ENCODE measurements at regions of chr4 and their contacts with region 1.

Region 1: GRCh38 chr4:173505924-173506518 is 24.0 kb downstream of the HAND2 start:
- DNase-seq: peak; percentile 45
- ATAC-seq: peak; percentile 96
- H3K4me3 ChIP-seq: no peak overlapping the region
- H3K27ac ChIP-seq: no peak overlapping the region
- H3K4me1 ChIP-seq: no peaks in the 10 kb centered on the region
- H3K27me3 ChIP-seq: peaks cover 82% of the 10 kb centered on the region
- CTCF ChIP-seq: peak; percentile 79
- POLR2A ChIP-seq: no peak
- RAD21 ChIP-seq: peak; percentile 85

Region 2: DNA sequence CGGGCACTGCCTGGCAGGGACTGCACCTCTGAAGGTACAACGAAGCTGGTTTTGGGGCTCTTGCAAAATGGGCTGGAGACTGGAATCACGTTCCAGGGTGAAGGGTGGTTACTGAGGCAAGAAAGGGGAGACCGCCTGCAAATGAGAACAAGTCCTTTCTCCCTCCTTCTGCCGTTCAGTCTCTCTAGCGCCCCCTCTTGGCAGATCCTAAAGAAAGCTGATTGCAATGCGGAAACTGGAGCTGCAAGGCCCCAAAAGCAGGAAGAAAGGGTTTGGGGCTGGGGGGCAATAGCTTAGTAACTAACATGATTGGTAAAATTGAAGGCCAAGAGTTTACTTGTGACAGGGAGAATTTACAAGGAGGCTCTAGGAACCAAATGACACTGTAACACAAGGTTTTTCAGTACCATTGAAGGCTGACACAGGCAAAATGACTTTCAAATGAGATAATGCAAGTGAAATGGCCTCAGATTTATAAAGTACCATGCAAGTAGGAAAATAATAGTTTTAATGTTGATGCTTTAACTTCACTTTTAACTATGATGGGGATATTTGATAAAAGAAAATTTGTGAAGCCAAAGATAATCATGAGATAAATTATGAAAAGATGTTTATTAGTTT is 246.7 kb after region 1 on chr4:
- CTCF ChIA-PET with region 1: no interaction called
- POLR2A ChIA-PET with region 1: no interaction called
- dilution Hi-C with region 1: no loop called
- in situ Hi-C with region 1: no loop called
- intact Hi-C with region 1: loop called (anchors 1 kb)
- DNase-seq: peak; percentile 4
- ATAC-seq: no peak
- H3K4me3 ChIP-seq: no peak overlapping the region
- H3K27ac ChIP-seq: no peak overlapping the region
- H3K4me1 ChIP-seq: no peaks in the 10 kb centered on the region
- H3K27me3 ChIP-seq: no peaks in the 10 kb centered on the region
- CTCF ChIP-seq: 0 out of 2 replicates have a peak, but pooled peaks have one; percentile 18
- POLR2A ChIP-seq: no peak
- RAD21 ChIP-seq: no peak

Region 3: DNA sequence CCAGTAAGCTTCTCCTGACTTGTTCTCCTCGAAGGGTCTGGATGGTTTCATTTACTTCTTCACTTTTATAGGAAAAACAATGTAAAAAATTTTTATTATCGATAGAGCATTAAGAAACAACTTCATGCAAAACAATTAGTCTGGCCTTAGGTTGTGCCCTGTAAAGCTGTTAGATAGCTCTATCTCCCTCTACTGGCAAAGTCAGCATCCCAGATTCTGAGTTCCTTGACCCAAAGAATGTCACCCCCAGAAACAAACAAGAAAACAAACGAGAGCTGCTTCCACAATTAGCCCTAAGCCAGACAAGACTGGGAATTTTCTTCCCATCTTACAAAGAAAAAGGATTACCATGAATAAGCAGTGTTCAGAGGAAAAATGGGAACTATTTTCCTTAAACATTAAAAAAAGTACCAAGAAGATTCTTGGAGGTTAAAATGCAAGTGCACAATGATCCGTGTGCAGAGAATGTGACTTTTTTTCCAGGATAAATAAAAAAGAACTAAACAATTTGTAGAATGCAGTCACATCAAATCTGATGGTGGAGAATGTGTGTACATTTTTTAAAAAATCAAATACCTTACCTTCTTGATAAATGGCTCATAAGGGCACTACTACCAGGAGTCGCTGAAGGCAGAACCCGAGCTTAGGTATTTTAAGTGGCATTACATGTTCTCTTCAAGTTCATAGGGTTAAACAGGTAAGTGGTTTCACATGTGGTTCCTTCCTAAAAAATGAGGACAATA is 484.3 kb after region 1 on chr4:
- CTCF ChIA-PET with region 1: interaction called, 5 read pairs
- POLR2A ChIA-PET with region 1: no interaction called
- dilution Hi-C with region 1: no loop called
- in situ Hi-C with region 1: loop called (anchors 10 kb)
- intact Hi-C with region 1: loop called (anchors 1 kb)
- DNase-seq: peak; percentile 46
- ATAC-seq: peak; percentile 83
- H3K4me3 ChIP-seq: no peak overlapping the region
- H3K27ac ChIP-seq: no peak overlapping the region
- H3K4me1 ChIP-seq: no peaks in the 10 kb centered on the region
- H3K27me3 ChIP-seq: peaks cover 2% of the 10 kb centered on the region
- CTCF ChIP-seq: peak; percentile 56
- POLR2A ChIP-seq: no peak
- RAD21 ChIP-seq: peak; percentile 69

Region 4: DNA sequence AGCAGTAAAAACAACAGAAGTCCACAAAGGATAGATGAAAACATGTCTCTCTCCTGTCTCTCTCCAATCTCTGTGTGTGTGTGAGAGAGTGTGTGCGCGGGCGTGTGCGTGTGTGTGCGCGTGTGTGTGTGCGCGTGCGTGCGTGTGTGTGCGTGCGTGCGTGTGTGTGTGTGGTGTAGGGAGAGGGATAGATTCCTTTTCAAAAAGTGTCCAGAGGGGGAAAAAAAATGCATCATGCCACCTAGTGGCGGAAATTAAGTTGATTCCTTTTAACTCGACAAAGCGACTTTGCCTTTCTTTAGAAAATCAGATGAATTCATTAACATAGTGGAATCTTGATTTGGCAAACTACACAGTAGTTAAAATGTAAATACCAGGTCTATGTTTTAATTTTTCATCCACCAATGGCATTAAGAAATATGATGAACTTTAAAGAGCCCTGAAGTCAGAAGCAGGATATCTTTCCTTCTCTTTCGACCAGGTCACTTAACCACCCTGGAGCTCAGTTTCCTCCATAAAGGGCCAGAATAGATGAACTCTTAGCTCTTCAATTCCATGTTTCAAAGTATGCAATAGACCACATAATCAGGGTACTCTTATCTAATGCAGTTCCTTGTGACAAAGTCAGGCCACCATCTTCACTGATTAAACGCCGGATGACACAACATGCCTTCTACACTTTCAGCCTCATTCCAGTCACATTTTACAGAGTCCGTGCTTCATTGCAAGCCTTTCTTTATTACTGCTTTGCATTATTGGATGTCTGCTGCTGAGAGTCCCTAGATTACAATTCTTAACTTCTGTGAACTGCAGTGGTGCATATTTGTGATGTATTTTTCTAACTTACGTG is 614.6 kb after region 1 on chr4:
- CTCF ChIA-PET with region 1: no interaction called
- POLR2A ChIA-PET with region 1: no interaction called
- dilution Hi-C with region 1: no loop called
- in situ Hi-C with region 1: loop called (anchors 10 kb)
- intact Hi-C with region 1: loop called (anchors 1 kb)
- DNase-seq: peak; percentile 72
- ATAC-seq: peak; percentile 84
- H3K4me3 ChIP-seq: peak overlapping the region; percentile 54
- H3K27ac ChIP-seq: no peak overlapping the region
- H3K4me1 ChIP-seq: no peaks in the 10 kb centered on the region
- H3K27me3 ChIP-seq: no peaks in the 10 kb centered on the region; the same call in 1 of the 2 replicates
- CTCF ChIP-seq: peak; percentile 61
- POLR2A ChIP-seq: no peak
- RAD21 ChIP-seq: peak; percentile 52

Region 5: DNA sequence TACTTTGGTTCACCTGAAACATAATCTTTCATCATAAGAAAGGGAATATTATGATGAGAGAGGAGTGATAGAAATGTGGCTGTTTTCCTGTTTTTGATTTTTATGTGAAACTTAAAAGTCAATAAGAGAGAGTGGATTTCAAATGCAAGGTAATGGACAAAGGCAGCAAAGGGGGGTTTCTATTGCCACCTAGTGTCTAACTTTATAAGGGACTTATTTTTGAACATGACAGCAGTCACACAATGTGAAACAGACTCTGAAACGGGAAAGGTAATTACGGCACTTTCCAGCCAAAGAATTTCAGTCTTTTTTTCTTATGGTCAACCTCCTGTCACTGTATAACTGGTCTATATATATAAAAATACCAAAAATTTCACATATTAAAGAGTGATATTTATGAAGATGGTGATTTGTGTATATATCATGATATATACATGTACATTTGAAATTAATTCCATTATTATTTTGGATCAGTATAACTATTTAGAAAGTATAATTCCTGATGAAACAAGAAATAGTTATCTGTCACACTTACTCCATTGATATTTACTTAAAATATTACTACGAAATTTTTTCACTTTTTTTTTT is 650.3 kb after region 1 on chr4:
- CTCF ChIA-PET with region 1: interaction called, 3 read pairs
- POLR2A ChIA-PET with region 1: no interaction called
- dilution Hi-C with region 1: no loop called
- in situ Hi-C with region 1: no loop called
- intact Hi-C with region 1: loop called (anchors 1 kb)
- DNase-seq: peak; percentile 38
- ATAC-seq: peak; percentile 67
- H3K4me3 ChIP-seq: no peak overlapping the region
- H3K27ac ChIP-seq: no peak overlapping the region
- H3K4me1 ChIP-seq: no peaks in the 10 kb centered on the region
- H3K27me3 ChIP-seq: peaks cover 6% of the 10 kb centered on the region
- CTCF ChIP-seq: peak; percentile 54
- POLR2A ChIP-seq: no peak
- RAD21 ChIP-seq: peak; percentile 52